Activated T-helper 1 cell treated with anti-CD3 and anti-CD28 coated beads, Interleukin-12 subunit alpha, Interleukin-12 subunit beta, Interleukin-2, Interleukin-4 antibody, amounts not matched to agents 30 ng/mL and 10 ng/mL and 1 ng/mL, durations not matched to agents 14 hours and 24 hours and 36 hours (primary cell): ENCODE measurements at regions of chr4 and their contacts with region 1.

Region 1: GRCh38 chr4:25406081-25406692 is 29.1 kb downstream of the ANAPC4 start:
- DNase-seq: no peak
- H3K4me3 Mint-ChIP-seq: no peak overlapping the region
- H3K27ac Mint-ChIP-seq: no peak overlapping the region
- H3K4me1 Mint-ChIP-seq: no peaks in the 10 kb centered on the region
- H3K27me3 Mint-ChIP-seq: no peaks in the 10 kb centered on the region

Region 2: GRCh38 chr4:25420931-25421330 is 14.7 kb after region 1 on chr4:
- intact Hi-C with region 1: loop called (anchors 1 kb)
- DNase-seq: no peak
- H3K4me3 Mint-ChIP-seq: no peak overlapping the region
- H3K27ac Mint-ChIP-seq: no peak overlapping the region
- H3K4me1 Mint-ChIP-seq: peaks cover 7% of the 10 kb centered on the region
- H3K27me3 Mint-ChIP-seq: no peaks in the 10 kb centered on the region

Region 3: DNA sequence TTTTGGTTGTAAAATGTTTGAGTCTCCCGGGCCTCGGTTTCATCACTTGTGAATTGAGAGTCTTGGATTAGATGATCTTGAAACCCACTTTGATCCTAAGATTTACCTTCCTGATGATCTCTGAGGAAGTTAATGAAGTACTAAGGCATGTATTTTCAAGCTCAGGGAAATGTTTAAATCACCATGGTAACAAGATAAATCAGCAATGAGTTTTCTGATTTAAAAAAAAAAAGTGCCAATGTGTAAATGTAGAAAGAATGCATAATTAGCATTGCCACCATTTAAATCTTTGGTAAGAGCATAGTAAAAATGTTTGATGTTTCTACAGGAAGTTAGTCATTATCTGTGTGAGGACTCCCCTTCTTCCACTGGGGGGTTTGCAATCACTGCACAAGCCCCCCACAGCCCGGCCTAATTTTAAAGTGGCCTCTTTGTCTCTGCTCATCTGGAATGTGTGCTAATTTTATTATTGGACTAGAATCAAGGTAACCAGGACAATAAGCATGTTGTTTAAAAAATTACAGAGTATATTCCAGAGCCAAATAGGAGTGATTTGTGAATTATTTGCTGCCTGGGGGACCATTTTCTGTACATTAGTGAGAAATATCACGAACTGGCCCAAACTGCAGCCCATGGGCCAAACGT is 343.1 kb after region 1 on chr4:
- intact Hi-C with region 1: no loop called
- DNase-seq: no peak
- H3K4me3 Mint-ChIP-seq: no peak overlapping the region
- H3K27ac Mint-ChIP-seq: no peak overlapping the region
- H3K4me1 Mint-ChIP-seq: no peaks in the 10 kb centered on the region
- H3K27me3 Mint-ChIP-seq: no peaks in the 10 kb centered on the region